ENCODE measurements at regions of chr5 and their contacts with region 1.

Region 1: DNA sequence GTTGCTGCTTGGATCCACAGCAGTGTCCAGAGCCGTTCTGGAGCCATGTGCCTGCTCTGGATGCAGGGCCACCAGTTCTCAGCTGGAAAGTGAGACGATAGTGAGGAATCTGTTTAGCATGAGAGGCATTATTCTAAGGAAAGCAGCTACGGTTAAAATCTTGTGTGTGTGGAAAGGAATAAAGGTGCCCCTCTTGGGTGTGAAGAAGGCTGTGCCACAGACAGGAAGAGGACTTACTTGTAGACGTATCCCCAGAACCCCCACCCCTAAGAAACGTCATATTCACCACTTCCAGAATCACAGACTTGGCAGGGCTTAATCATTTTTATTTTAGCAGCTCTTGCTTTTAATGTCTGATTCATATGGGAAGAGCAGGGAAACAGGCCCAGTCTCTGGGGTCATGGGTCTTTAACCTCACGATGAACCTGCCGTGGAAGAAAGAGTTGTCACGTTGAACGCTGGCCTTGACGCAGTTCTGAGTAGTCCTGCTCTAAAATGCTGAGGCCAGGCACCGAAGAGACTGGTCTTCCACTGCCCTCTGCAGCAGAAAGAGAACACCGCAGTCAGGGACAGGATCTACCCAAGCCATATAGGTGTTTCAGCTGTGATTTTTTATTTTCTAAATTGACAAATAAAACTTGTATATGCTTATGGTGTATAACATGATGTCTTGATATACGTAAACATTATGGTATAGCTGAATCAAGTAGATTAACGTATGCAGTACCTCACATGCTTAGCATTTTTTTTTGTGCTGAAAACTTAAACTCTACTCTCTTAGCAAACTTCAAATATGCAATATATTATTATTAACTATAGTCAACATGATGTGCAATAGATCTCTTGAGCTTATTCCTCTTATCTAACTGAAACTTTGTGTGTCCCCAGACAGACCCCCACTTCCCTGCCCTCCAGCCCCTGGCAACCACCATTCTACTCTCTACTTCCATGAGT is 38.8 kb downstream of the CARTPT start:
- DNase-seq: peak; percentile 31 to 63
- H3K4me3 ChIP-seq: no peak overlapping the region
- H3K27ac ChIP-seq: no peak overlapping the region
- H3K4me1 ChIP-seq: no peaks in the 10 kb centered on the region; a peak in 1 of 7 replicates
- H3K27me3 ChIP-seq: no peaks in the 10 kb centered on the region
- CTCF ChIP-seq: peak; percentile 78 to 89 (median 80)
- EP300 ChIP-seq: no peak
- POLR2A ChIP-seq: no peak
- RAD21 ChIP-seq: peak; percentile 97 to 98

Region 2: DNA sequence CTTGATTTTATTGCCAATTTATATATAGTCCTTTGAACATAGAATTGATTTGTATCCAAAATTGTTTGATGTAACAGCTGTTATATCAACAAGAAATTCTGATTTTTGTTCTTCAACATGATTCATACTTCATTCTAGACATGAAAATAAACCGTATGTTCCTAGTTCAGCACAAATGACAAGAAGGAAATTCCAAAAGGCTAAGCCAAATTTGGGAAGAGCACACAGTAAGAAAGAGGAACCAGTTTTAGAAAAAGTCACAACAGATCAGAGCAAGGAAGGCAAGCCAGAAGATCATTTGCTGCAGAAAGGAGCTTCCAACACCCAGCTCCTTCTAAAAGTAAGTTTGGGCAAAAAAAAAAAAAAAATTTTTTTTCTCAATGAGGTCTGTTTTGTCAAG is 235.7 kb before region 1 on chr5:
- CTCF ChIA-PET with region 1: no interaction called
- POLR2A ChIA-PET with region 1: no interaction called
- DNase-seq: no peak
- H3K4me3 ChIP-seq: no peak overlapping the region
- H3K27ac ChIP-seq: no peak overlapping the region
- H3K4me1 ChIP-seq: no peaks in the 10 kb centered on the region
- H3K27me3 ChIP-seq: no peaks in the 10 kb centered on the region
- CTCF ChIP-seq: no peak
- EP300 ChIP-seq: no peak
- POLR2A ChIP-seq: no peak
- RAD21 ChIP-seq: no peak

Region 3: GRCh38 chr5:71666321-71666720 is 91.5 kb before region 1 on chr5:
- CTCF ChIA-PET with region 1: interaction called, 12 read pairs
- POLR2A ChIA-PET with region 1: interaction called, 3 read pairs
- DNase-seq: no peak
- H3K4me3 ChIP-seq: no peak overlapping the region
- H3K27ac ChIP-seq: no peak overlapping the region
- H3K4me1 ChIP-seq: no peaks in the 10 kb centered on the region
- H3K27me3 ChIP-seq: no peaks in the 10 kb centered on the region
- CTCF ChIP-seq: no peak
- EP300 ChIP-seq: no peak
- POLR2A ChIP-seq: no peak
- RAD21 ChIP-seq: no peak

Region 4: GRCh38 chr5:71905834-71906711 is 148.2 kb after region 1 on chr5:
- CTCF ChIA-PET with region 1: no interaction called
- POLR2A ChIA-PET with region 1: no interaction called
- DNase-seq: no peak
- H3K4me3 ChIP-seq: no peak overlapping the region
- H3K27ac ChIP-seq: no peak overlapping the region
- H3K4me1 ChIP-seq: peaks cover 0 to 2% (median 1%) of the 10 kb centered on the region in 4 experiments; a peak in 1 of 7 replicates
- H3K27me3 ChIP-seq: no peaks in the 10 kb centered on the region
- CTCF ChIP-seq: no peak
- EP300 ChIP-seq: no peak
- POLR2A ChIP-seq: no peak
- RAD21 ChIP-seq: no peak

Measured in H1 (cell line).